Activated T-helper 2 cell treated with anti-CD3 and anti-CD28 coated beads, Interferon-gamma antibody, Interleukin-2, Interleukin-4, amounts not matched to agents 10 μg/mL and 5 μg/mL and 100 μg/mL, durations not matched to agents 14 hours and 24 hours and 36 hours (primary cell): ENCODE measurements at regions of chr20 and their contacts with region 1.

Region 1: DNA sequence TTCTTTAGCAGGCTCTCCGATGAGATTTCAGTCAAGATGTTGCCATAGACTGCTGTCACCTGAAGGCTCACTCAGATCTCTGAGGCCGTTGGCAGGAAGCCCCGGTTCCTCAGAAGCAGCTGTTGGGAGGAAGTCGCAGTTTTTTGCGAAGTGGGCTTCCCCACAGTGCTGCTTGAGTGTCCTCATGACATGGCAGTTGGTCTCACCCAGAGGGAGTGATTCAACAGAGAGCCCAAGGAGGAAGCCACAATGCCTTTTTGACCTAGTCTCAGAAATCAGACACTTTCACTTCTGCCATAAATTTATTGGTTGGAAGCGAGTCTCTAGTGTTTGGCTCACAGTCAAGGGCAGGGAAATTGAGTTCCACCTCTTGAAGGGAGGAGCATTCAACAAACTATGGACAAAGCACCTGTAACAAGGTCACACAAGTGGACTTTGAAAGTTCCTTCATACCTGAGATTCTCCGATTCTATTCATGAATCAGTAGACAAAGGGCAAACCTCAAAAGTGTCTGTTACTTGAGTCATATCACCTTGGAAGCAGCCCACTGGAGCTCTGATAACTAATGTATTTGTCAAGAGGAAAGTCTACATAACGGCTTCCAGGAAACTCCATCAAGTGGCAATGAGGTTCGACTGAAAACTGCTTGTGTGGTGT is 208.3 kb downstream of the TASP1 start:
- DNase-seq: peak; percentile 57
- H3K4me3 Mint-ChIP-seq: peak overlapping the region; percentile 23
- H3K27ac Mint-ChIP-seq: peak overlapping the region; percentile 80
- H3K4me1 Mint-ChIP-seq: peaks cover 30% of the 10 kb centered on the region
- H3K27me3 Mint-ChIP-seq: no peaks in the 10 kb centered on the region

Region 2: DNA sequence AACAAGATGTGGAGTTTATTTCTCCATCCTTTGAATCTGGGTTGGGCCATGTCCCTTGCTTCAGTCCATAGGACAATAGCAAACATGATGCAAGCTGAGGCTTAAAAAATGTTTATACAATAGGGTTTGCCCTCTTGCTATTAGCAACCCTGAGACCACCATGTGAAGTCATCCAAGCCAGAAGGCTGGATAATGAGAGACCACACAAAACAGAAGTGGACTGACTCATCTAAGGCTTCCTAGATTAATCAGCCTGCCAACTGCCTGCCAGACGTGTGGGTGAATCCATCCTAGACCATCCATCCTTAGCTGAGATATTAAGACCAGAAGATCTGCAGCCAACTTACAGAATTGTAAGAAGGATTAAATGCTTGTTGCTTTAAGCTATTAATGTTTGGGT is 247.5 kb before region 1 on chr20:
- intact Hi-C with region 1: loop called (anchors 1 kb)
- DNase-seq: no peak
- H3K4me3 Mint-ChIP-seq: no peak overlapping the region
- H3K27ac Mint-ChIP-seq: no peak overlapping the region
- H3K4me1 Mint-ChIP-seq: peaks cover 14% of the 10 kb centered on the region
- H3K27me3 Mint-ChIP-seq: no peaks in the 10 kb centered on the region

Region 3: DNA sequence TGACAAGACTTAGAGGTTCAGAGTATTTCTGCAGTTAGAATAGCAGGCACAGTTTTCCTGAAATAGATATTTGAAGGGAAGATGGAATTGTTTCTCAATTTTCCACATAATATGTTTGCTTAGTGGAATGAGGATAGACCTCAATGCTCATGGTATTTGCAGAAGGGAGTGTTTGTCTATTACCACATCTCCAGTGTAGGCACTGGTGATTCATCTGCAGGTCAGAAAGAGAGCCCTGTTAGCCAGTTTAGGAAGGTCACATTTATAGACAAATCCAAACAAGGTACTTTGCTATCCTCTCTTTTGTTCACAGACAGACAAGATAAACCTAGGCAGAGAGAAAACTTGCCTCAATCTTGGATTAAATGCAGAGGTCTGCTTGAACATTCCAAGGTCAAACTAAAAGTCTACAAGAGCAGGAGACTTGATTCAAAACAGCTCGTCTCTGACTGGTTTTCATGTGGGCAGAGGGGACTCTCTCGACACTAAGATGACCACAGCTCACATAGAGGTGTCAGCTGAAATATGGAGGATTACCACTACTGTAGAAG is 186.6 kb before region 1 on chr20:
- intact Hi-C with region 1: loop called (anchors 1 kb)
- DNase-seq: no peak
- H3K4me3 Mint-ChIP-seq: no peak overlapping the region
- H3K27ac Mint-ChIP-seq: no peak overlapping the region
- H3K4me1 Mint-ChIP-seq: peaks cover 36% of the 10 kb centered on the region
- H3K27me3 Mint-ChIP-seq: no peaks in the 10 kb centered on the region

Region 4: DNA sequence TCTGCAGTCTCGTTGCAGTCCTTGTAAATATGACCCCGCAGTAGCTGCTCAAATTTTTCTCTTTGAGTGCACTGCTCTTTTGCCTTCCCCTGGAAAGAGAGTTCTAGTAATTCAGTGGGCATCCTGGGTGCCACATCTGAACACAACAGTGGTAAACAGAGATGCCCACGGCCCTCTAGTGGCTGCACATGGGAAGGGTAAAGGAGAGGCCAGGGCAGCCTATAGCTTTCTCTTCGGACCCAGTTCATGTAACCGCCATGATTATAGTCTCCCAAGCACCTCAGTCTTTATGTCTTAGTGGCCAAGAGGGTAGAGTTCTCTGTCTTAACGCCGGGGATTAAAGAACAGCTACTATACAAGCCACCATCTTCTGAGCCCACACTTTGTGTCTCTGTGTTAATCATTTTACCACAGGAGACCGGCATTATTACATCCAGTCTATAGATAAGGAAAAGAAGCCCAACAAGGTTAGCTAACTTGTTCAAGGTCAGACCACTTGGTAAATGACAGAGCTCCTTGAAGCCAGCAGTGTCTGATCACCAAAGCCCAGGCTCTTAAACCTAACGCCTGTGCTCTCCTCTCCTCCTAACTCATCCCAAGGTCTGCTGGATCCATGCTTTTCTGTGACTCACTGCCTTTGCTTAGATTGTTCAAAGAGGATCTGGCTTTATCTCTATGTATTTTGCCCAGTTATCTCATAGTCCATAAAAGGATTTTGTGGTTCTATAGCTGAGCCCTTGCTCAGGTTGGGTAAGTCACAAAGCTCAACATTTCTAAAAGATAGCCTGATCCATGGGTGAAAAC is 127.6 kb before region 1 on chr20:
- intact Hi-C with region 1: no loop called
- DNase-seq: peak; percentile 21
- H3K4me3 Mint-ChIP-seq: no peak overlapping the region
- H3K27ac Mint-ChIP-seq: no peak overlapping the region
- H3K4me1 Mint-ChIP-seq: no peaks in the 10 kb centered on the region
- H3K27me3 Mint-ChIP-seq: no peaks in the 10 kb centered on the region

Region 5: DNA sequence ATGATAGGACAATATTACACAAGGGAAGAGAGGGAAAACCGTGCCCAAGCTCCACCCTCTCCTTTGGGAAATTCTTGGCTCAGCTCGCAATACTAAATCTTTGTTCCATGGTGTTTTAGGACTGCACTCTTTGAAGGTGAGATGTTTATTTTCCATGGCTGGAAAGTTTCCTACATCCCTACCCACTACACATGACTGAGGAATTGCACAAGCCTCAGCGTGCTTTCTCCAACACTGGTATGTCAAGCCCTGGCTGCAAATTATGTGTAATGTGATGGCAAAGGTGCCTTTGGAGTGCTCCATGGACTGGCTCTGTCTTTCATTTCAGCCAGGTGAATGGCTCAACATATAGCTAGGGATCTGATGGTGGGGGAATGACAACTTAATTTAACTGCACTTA is 75.1 kb before region 1 on chr20:
- intact Hi-C with region 1: no loop called
- DNase-seq: no peak
- H3K4me3 Mint-ChIP-seq: no peak overlapping the region
- H3K27ac Mint-ChIP-seq: no peak overlapping the region
- H3K4me1 Mint-ChIP-seq: peaks cover 3% of the 10 kb centered on the region
- H3K27me3 Mint-ChIP-seq: no peaks in the 10 kb centered on the region

Region 6: GRCh38 chr20:13458860-13459451 is 28.5 kb after region 1 on chr20:
- intact Hi-C with region 1: no loop called
- DNase-seq: no peak
- H3K4me3 Mint-ChIP-seq: no peak overlapping the region
- H3K27ac Mint-ChIP-seq: no peak overlapping the region
- H3K4me1 Mint-ChIP-seq: peaks cover 2% of the 10 kb centered on the region
- H3K27me3 Mint-ChIP-seq: no peaks in the 10 kb centered on the region

Region 7: GRCh38 chr20:13546497-13547131 is 116.1 kb after region 1 on chr20:
- intact Hi-C with region 1: loop called (anchors 2 kb)
- DNase-seq: peak; percentile 52
- H3K4me3 Mint-ChIP-seq: no peak overlapping the region
- H3K27ac Mint-ChIP-seq: no peak overlapping the region
- H3K4me1 Mint-ChIP-seq: peaks cover 5% of the 10 kb centered on the region
- H3K27me3 Mint-ChIP-seq: no peaks in the 10 kb centered on the region

Region 8: DNA sequence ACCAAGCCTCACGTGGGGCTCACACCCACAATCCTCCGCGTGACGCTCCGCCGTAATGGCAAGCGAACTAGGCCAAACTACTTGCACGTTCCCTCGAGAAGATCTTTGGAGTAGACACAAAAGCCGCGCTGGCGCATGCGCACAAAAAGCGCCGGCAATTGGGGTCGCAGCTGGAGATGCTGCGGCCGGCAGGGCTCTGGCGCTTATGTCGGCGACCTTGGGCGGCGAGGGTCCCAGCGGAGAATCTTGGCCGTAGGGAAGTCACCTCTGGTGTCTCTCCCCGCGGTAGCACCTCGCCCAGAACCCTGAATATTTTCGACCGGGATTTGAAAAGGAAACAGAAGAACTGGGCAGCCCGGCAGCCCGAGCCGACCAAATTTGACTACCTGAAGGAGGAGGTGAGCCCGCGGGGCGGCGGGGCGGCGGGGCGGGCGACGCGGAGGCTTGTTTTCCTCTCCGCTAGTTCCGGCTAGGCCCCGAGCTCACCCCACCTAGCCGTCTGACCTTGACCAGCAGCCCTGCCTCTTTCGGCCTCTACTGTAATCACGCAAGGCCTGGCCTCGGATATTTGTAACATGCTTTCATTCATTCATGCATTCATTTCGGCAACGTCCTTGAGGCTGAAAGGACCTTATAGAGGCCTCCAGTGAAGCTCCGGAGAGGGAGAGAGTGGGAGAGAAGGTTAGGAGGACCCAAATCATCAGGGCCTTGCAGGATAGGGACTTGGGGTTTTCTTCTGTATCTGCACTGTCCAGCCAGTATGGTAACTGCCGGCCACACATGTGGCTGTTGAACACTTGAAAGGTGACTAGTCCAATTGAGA is 354.6 kb after region 1 on chr20 and contains the starts of genes ESF1 and NDUFAF5:
- intact Hi-C with region 1: loop called (anchors 2 kb)
- DNase-seq: peak; percentile 91
- H3K4me3 Mint-ChIP-seq: peak within 1 kb of the TSS; percentile 97
- H3K27ac Mint-ChIP-seq: peak within 1 kb of the TSS; percentile 93
- H3K4me1 Mint-ChIP-seq: peaks cover 29% of the 10 kb centered on the region
- H3K27me3 Mint-ChIP-seq: no peaks in the 10 kb centered on the region
- total RNA-seq, gene ESF1: 26.9 and 27.2 TPM in 2 replicates
- total RNA-seq, gene NDUFAF5: 33.3 and 36.1 TPM in 2 replicates